ENCODE measurements at regions of chr19 and their contacts with region 1.

Region 1: DNA sequence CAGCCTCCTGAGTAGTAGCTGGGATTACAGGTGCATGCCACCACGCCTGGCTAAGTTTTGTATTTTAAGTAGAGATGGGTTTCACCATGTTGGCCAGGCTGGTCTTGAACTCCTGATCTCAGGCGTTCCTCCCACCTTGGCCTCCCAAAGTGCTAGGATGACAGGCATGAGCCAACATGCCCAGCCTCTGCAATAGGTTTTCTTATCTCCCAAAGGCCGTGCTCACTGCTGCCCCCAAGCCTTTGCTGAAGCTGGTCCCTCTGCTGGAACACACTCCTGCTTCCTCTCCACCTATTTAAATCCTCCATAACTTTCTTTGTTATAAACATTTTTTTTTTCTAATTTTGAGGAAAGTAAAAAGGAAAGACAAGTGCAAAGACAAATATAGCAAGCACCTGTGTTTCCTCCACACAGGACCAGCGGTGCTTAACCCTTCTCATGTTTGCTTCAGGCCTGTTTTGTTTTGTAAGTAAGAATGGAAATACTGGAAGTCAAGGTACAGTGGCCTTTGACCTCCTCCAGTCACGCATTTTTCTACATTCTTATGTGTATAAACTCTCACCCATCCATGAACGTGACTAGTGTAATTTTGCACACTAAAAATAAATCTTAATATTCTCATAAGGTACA is 14.5 kb upstream of the TNFAIP8L1 start:
- DNase-seq: peak in 1 of 5 donors; percentile 13
- ATAC-seq: no peak
- H3K4me3 ChIP-seq: no peak overlapping the region
- H3K27ac ChIP-seq: no peak overlapping the region
- H3K4me1 ChIP-seq: no peaks in the 10 kb centered on the region
- H3K27me3 ChIP-seq: peaks cover 0 to 26% (median 8%) of the 10 kb centered on the region in 9 donors
- CTCF ChIP-seq: peak in 2 of 12 donors; percentile 13 to 14
- POLR2A ChIP-seq: no peak

Region 2: DNA sequence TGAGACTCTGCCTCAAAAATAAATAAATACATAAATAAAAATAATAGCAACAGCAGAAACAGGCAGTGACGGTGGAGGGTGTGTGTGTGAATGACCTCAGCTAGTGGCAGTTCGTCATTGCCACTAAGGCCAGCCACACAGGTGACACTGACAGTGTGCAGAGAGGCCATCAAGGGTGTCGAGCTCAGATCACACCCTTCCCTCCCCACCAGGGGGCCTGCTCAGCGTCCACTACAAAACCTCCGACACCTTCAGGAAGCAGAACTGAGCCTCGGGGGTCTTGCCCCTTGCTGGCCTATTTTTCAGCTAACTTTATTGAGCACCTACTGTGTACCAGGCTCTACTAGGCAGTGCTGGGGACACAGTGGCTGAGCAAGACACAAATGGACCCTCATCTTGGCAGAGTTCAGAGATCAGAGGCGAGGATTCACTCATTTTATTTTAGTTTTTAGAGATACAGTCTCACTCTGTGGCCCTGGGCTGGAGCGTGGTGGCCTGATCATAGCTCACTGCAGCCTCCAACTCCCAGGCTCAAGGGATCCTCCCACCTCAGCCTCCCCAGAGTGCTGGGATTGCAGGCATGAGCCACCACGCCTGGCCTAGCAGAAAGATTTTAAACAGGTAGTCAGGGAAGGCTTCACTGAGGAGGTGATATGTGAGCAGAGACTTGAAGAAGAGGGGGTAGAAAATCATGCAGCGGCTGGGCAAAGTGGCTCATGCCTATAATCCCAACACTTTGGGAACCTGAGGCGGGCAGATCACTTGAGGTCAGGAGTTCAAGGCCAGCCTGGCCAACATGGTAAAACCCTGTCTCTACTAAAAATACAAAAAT is 35.1 kb before region 1 on chr19:
- intact Hi-C with region 1: loop called in 1 of 10 experiments (anchors 5 kb)
- DNase-seq: peak in 3 of 5 donors; percentile 31 to 67 (median 67)
- ATAC-seq: peak in 3 of 4 donors; percentile 85 to 93 (median 92)
- H3K4me3 ChIP-seq: no peak overlapping the region
- H3K27ac ChIP-seq: no peak overlapping the region
- H3K4me1 ChIP-seq: peaks cover 0 to 3% (median 2%) of the 10 kb centered on the region in 12 donors
- H3K27me3 ChIP-seq: peaks cover 3 to 42% (median 13%) of the 10 kb centered on the region in 9 donors
- CTCF ChIP-seq: peak in 11 of 12 donors; percentile 17 to 53 (median 35)
- POLR2A ChIP-seq: no peak

Measured in heart left ventricle (tissue), 16 donors.